Activated T-helper 2 cell treated with anti-CD3 and anti-CD28 coated beads, Interferon-gamma antibody, Interleukin-2, Interleukin-4, amounts not matched to agents 10 μg/mL and 5 μg/mL and 100 μg/mL, durations not matched to agents 14 hours and 24 hours and 36 hours (primary cell): ENCODE measurements at regions of chr4 and their contacts with region 1.

Region 1: DNA sequence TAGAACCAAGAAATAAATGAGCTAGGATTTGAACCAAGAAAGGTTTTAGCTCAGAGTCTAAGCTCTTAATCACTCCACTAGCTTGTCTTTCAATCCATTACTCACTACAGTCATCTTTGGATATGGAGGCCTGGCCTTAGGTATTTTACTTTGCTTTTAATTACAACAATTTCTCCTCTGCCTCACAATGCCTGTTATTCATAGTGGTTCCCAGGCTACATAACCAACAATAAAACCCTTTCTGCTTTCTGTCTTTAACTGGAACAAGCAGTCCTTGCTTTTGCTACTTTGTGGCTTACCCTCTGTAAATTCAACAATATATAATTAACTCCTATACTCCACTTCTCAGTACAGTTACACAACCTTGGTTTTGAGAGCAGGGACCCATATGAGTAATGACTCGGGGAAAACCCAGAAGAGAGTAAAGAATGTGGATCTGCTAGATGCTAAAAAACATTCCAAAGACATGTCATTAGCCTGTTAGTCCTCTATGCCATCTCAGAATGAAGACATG is 94.7 kb upstream of the NAP1L5 start:
- DNase-seq: no peak
- H3K4me3 Mint-ChIP-seq: no peak overlapping the region
- H3K27ac Mint-ChIP-seq: peak overlapping the region; percentile 47
- H3K4me1 Mint-ChIP-seq: peaks cover 7% of the 10 kb centered on the region
- H3K27me3 Mint-ChIP-seq: peaks cover 16% of the 10 kb centered on the region

Region 2: GRCh38 chr4:88533937-88534750 is 258.2 kb before region 1 on chr4:
- intact Hi-C with region 1: loop called (anchors 5 kb)
- DNase-seq: no peak
- H3K4me3 Mint-ChIP-seq: no peak overlapping the region
- H3K27ac Mint-ChIP-seq: no peak overlapping the region
- H3K4me1 Mint-ChIP-seq: peaks cover 6% of the 10 kb centered on the region
- H3K27me3 Mint-ChIP-seq: peaks cover 3% of the 10 kb centered on the region

Region 3: GRCh38 chr4:88803600-88804096 is 11.3 kb after region 1 on chr4:
- intact Hi-C with region 1: loop called (anchors 1 kb)
- DNase-seq: no peak
- H3K4me3 Mint-ChIP-seq: no peak overlapping the region
- H3K27ac Mint-ChIP-seq: no peak overlapping the region
- H3K4me1 Mint-ChIP-seq: peaks cover 10% of the 10 kb centered on the region
- H3K27me3 Mint-ChIP-seq: peaks cover 38% of the 10 kb centered on the region